SK-N-SH (cell line): ENCODE measurements at regions of chr14 and their contacts with region 1.

Region 1: DNA sequence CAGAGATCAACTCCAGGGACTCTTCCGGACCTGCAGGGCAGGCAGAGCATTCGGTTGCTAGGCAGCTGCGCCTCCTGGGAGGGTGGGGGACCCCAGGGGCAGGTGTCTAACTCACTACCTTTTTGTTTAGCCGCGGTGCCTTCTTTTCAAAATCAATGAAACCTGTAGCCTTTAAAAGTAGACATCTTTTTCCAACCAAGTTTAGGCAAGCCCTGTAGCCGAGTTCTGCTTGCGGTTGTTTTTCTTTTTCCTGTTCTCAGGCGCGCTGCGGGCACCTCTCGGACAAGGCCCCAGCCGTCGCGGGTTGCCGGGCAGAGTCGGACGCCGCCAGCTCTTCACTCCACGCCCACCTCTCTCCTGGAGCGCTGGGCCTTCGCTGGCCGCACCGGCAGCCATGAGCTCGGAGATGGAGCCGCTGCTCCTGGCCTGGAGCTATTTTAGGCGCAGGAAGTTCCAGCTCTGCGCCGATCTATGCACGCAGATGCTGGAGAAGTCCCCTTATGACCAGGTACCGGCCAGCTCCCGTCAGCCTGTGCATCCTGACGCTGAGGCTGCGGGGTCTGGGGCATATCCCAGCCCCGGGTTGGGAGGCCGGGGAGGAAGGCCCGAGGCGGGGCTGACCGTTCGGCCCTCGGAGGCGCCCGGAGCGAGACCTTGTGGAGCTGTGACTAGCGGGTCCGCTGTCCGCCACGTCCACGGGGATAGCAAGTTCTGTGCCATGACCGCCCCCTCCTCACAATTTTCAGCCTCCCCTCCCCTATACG is at the start of gene TTC8:
- DNase-seq: peak; percentile 87
- H3K4me3 ChIP-seq: peak within 1 kb of the TSS; percentile 75 to 95
- H3K27ac ChIP-seq: peak within 1 kb of the TSS; percentile 81 to 100
- H3K4me1 ChIP-seq: peaks cover 10 to 27% of the 10 kb centered on the region in 2 experiments; a peak in 3 of 4 replicates
- H3K27me3 ChIP-seq: no peaks in the 10 kb centered on the region
- CTCF ChIP-seq: no peak
- EP300 ChIP-seq: peak; percentile 33 to 52; a peak in 2 of 4 replicates
- RAD21 ChIP-seq: peak; percentile 12
- polyA plus RNA-seq, gene TTC8: 51.6 and 73.9 TPM in 2 replicates

Region 2: DNA sequence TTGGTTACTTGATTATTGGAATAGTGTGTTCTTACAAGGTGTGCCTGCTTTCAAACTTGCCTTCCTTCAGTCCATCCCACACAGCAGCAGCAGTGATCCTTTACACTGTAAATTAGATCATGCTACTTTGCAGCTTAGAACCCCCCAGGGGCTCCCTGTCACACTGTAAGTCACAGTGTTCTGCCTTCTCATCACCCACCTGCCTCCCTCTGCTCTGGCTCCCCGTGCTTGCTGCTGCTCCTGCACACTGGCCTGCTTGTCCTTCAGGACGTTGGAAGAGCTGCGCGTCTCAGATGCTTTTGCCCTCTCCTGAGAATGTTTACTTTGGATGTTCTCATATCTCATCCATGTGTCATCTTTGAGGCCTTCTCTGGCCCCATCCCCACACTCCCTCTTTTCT is 234.3 kb before region 1 on chr14:
- CTCF ChIA-PET with region 1: no interaction called
- POLR2A ChIA-PET with region 1: no interaction called
- DNase-seq: no peak
- H3K4me3 ChIP-seq: no peak overlapping the region
- H3K27ac ChIP-seq: no peak overlapping the region
- H3K4me1 ChIP-seq: no peaks in the 10 kb centered on the region
- H3K27me3 ChIP-seq: no peaks in the 10 kb centered on the region
- CTCF ChIP-seq: no peak
- EP300 ChIP-seq: no peak
- RAD21 ChIP-seq: no peak

Region 3: GRCh38 chr14:88834883-88835431 is 10.5 kb after region 1 on chr14:
- CTCF ChIA-PET with region 1: interaction called, 13 read pairs
- POLR2A ChIA-PET with region 1: interaction called, 11 read pairs
- DNase-seq: no peak
- H3K4me3 ChIP-seq: peak overlapping the region in 1 of 2 experiments; percentile 24; a peak in 1 of 4 replicates
- H3K27ac ChIP-seq: peak overlapping the region; percentile 77 to 100
- H3K4me1 ChIP-seq: peaks cover 13 to 54% of the 10 kb centered on the region in 2 experiments
- H3K27me3 ChIP-seq: no peaks in the 10 kb centered on the region
- CTCF ChIP-seq: no peak
- EP300 ChIP-seq: no peak
- RAD21 ChIP-seq: no peak

Region 4: GRCh38 chr14:88856786-88857366 is 32.4 kb after region 1 on chr14:
- CTCF ChIA-PET with region 1: interaction called, 4 read pairs
- POLR2A ChIA-PET with region 1: interaction called, 87 read pairs
- DNase-seq: no peak
- H3K4me3 ChIP-seq: no peak overlapping the region
- H3K27ac ChIP-seq: peak overlapping the region in 1 of 2 experiments; percentile 86; a peak in 2 of 4 replicates
- H3K4me1 ChIP-seq: peaks cover 0 to 34% of the 10 kb centered on the region in 2 experiments; a peak in 2 of 4 replicates
- H3K27me3 ChIP-seq: no peaks in the 10 kb centered on the region
- CTCF ChIP-seq: no peak
- EP300 ChIP-seq: no peak
- RAD21 ChIP-seq: no peak

Region 5: GRCh38 chr14:88904864-88905263 is 80.4 kb after region 1 on chr14:
- CTCF ChIA-PET with region 1: interaction called, 49 read pairs
- POLR2A ChIA-PET with region 1: interaction called, 59 read pairs
- DNase-seq: peak; percentile 26
- H3K4me3 ChIP-seq: no peak overlapping the region
- H3K27ac ChIP-seq: peak overlapping the region; percentile 24 to 100; a peak in 3 of 4 replicates
- H3K4me1 ChIP-seq: peaks cover 0 to 40% of the 10 kb centered on the region in 2 experiments; a peak in 2 of 4 replicates
- H3K27me3 ChIP-seq: no peaks in the 10 kb centered on the region
- CTCF ChIP-seq: no peak
- EP300 ChIP-seq: no peak
- RAD21 ChIP-seq: no peak